ENCODE measurements at regions of chr6 and their contacts with region 1.

Region 1: GRCh38 chr6:25070547-25071366 is 135.0 kb upstream of the RIPOR2 start:
- DNase-seq: no peak
- H3K4me3 ChIP-seq: no peak overlapping the region
- H3K27ac ChIP-seq: no peak overlapping the region
- H3K4me1 ChIP-seq: no peaks in the 10 kb centered on the region
- H3K27me3 ChIP-seq: no peaks in the 10 kb centered on the region
- CTCF ChIP-seq: peak; percentile 76 to 96 (median 94)
- POLR2A ChIP-seq: no peak

Region 2: GRCh38 chr6:23663652-23664051 is 1407.1 kb before region 1 on chr6:
- intact Hi-C with region 1: no loop called
- DNase-seq: no peak
- H3K4me3 ChIP-seq: no peak overlapping the region
- H3K27ac ChIP-seq: no peak overlapping the region
- H3K4me1 ChIP-seq: no peaks in the 10 kb centered on the region
- H3K27me3 ChIP-seq: no peaks in the 10 kb centered on the region
- CTCF ChIP-seq: no peak
- POLR2A ChIP-seq: no peak

Region 3: DNA sequence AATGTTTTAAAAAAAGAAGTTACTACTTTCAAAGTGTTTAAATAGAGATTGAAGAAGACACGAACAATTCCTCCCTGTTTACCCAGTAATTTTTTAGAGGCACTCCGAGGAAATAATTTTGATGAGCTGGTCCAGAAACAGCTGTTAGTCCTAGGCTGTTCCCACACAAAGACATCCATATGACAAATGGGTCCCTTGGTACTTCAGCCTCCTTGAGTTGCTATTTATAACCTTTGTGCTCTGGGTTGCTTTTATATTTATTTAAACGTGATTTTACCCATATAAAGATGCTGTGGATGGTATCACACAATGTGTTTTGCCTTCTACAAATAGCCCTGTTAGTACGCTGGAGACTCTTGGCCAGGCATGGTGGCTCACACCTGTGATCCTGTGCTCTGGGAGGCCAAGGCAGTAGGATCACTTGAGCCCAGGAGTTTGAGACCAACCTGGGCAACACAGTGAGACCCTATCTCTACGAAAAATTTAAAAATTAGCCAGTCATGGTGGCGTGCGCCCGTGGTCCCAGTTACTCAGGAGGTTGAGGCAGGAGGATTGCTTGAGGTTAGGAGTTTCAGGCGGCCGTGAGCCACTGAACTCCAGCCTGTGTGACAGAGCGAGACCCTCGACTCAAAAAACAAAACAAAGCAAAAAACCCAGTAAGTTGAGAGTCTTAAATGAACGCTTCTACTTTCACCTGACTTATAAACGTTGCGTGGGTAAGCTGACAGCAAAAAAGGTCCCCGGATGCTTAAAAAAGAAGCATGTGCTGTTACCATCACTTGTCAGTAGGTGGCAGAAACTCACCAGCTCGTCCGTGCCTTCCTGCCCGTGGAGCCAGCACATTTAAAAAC is 215.1 kb before region 1 on chr6:
- intact Hi-C with region 1: loop called (anchors 5 kb)
- DNase-seq: no peak
- H3K4me3 ChIP-seq: no peak overlapping the region
- H3K27ac ChIP-seq: peak overlapping the region; percentile 59
- H3K4me1 ChIP-seq: peaks cover 29% of the 10 kb centered on the region
- H3K27me3 ChIP-seq: no peaks in the 10 kb centered on the region
- CTCF ChIP-seq: peak; percentile 60 to 83 (median 76)
- POLR2A ChIP-seq: no peak

Region 4: DNA sequence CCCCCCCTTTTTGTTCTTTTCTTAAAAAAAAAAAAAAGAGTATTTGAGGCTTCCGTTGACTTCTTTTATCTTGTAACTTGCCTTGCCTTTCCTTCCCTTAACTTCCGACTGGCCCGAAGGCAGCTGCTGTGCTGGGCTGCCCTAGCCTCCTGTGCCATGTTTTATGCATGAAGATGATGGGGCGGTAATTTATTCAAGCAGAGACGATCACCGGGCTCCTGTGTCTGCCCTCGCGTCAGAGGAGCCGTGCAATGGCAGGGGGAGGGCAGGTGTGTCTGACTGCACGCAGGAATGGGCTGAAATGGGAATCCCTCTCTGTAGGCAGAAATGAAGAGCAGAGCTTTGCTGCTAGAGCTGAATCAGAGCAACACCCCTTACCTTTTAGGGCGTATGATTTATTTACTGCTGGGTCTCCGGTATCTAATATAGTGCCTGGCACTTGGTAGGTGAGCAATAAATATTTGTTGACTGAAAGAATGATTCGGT is 28.7 kb before region 1 on chr6:
- intact Hi-C with region 1: no loop called
- DNase-seq: no peak
- H3K4me3 ChIP-seq: no peak overlapping the region
- H3K27ac ChIP-seq: no peak overlapping the region
- H3K4me1 ChIP-seq: no peaks in the 10 kb centered on the region
- H3K27me3 ChIP-seq: no peaks in the 10 kb centered on the region
- CTCF ChIP-seq: no peak
- POLR2A ChIP-seq: no peak

Measured in vagina (tissue), 2 donors.